A549 (cell line): ENCODE measurements at regions of chr7 and their contacts with region 1.

Region 1: GRCh38 chr7:66628361-66629140 is at the start of gene KCTD7:
- DNase-seq: peak; percentile 96
- ATAC-seq: peak; percentile 95 to 96
- H3K4me3 ChIP-seq: peak within 1 kb of the TSS; percentile 98
- H3K27ac ChIP-seq: peak within 1 kb of the TSS; percentile 99 to 100
- H3K4me1 ChIP-seq: peaks cover 9% of the 10 kb centered on the region; the same call in 2 of the 3 replicates
- CTCF ChIP-seq: no peak
- EP300 ChIP-seq: no peak
- POLR2A ChIP-seq: peak; percentile 98
- RAD21 ChIP-seq: peak in 1 of 2 experiments; percentile 21; a peak in 1 of 5 replicates
- polyA plus RNA-seq, gene KCTD7: 10.3 and 11.7 TPM in 2 replicates

Region 2: GRCh38 chr7:66617295-66617694 is 11.3 kb before region 1 on chr7:
- CTCF ChIA-PET with region 1: interaction called, 3 read pairs
- POLR2A ChIA-PET with region 1: interaction called, 12 read pairs
- DNase-seq: no peak
- ATAC-seq: no peak
- H3K4me3 ChIP-seq: no peak overlapping the region
- H3K27ac ChIP-seq: no peak overlapping the region
- H3K4me1 ChIP-seq: no peaks in the 10 kb centered on the region
- CTCF ChIP-seq: no peak
- EP300 ChIP-seq: no peak
- POLR2A ChIP-seq: no peak
- RAD21 ChIP-seq: no peak

Region 3: DNA sequence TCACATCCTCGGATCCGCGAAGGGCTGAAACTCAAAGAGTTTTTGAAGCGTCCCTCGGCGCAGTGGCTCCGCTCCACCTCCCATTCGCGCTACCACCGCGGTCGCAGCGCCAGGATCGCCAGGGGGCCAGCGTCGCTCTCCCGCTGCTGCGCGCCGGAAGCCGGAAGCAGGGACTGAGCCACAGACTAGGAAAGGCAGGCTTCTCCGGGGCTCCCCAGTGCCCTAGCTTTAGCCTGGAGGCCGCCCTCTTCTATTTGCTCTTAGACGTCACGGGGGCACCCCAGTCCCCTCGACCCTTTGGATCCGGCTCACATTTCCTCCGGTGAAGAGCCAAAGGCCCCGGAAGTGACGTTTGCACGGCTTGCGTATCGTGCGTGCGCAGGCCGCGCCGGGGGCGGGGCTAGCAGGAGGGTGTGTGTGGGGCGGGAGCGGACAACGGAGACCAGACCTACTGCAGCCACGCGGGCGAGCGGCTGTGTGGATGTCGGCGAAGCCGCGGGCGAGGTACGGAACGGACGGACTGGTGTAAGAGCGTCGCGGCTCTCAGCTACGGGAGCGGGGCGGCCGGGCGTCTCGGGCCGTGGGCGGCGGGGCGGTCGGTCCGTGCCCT is 25.7 kb after region 1 on chr7:
- CTCF ChIA-PET with region 1: no interaction called
- POLR2A ChIA-PET with region 1: interaction called, 21 read pairs
- DNase-seq: peak; percentile 96 to 98
- ATAC-seq: peak; percentile 93 to 95
- H3K4me3 ChIP-seq: peak overlapping the region; percentile 94
- H3K27ac ChIP-seq: peak overlapping the region; percentile 89 to 92
- H3K4me1 ChIP-seq: peaks cover 16% of the 10 kb centered on the region
- CTCF ChIP-seq: no peak
- EP300 ChIP-seq: no peak
- POLR2A ChIP-seq: peak; percentile 90
- RAD21 ChIP-seq: peak; percentile 10 to 18; a peak in 1 of 5 replicates

Region 4: GRCh38 chr7:66681491-66682349 is 53.2 kb after region 1 on chr7:
- CTCF ChIA-PET with region 1: no interaction called
- POLR2A ChIA-PET with region 1: interaction called, 12 read pairs
- DNase-seq: peak; percentile 96 to 97
- ATAC-seq: peak; percentile 97 to 98
- H3K4me3 ChIP-seq: peak overlapping the region; percentile 88
- H3K27ac ChIP-seq: peak overlapping the region; percentile 95
- H3K4me1 ChIP-seq: peaks cover 15% of the 10 kb centered on the region; the same call in 2 of the 3 replicates
- CTCF ChIP-seq: no peak
- EP300 ChIP-seq: no peak
- POLR2A ChIP-seq: peak; percentile 73
- RAD21 ChIP-seq: no peak

Region 5: DNA sequence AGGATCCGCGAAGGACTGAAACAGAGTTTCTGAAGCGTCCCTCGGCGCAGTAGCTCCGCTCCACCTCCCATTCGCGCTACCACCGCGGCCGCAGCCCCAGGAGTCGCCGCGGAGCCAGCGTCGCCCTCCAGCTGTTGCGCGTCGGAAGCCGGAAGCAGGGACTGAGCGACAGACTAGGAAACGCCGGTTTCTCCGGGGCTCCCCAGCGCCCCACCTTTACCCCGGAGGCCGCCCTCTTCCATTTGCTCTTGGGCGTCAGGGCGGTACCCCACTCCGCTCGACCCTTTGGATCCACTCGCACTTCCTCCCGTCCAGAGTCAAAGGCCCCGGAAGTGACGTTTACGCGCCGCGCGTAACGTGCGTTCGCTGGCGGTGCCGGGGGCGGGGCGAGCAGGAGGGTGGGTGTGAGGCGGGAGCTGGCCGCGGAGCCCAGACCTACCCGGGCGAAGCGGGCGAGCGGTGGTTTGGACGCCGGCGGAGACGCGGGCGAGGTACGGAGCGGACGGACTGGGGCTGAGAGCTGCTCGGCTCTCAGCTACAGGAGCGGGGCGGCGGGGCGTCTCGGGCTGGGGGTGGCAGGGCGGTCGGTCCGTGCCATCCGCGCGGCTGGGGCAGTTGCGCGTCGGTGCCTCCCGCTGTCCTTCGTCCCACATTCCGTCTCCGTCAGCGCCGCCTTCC is 111.9 kb after region 1 on chr7 and contains the start of gene RABGEF1:
- CTCF ChIA-PET with region 1: interaction called, 3 read pairs
- POLR2A ChIA-PET with region 1: interaction called, 12 read pairs
- DNase-seq: peak; percentile 94 to 96
- ATAC-seq: peak; percentile 94 to 95
- H3K4me3 ChIP-seq: peak within 1 kb of the TSS; percentile 76
- H3K27ac ChIP-seq: peak within 1 kb of the TSS; percentile 82 to 92
- H3K4me1 ChIP-seq: peaks cover 9% of the 10 kb centered on the region; the same call in 2 of the 3 replicates
- CTCF ChIP-seq: no peak
- EP300 ChIP-seq: no peak
- POLR2A ChIP-seq: peak; percentile 73
- RAD21 ChIP-seq: no peak
- polyA plus RNA-seq, gene RABGEF1: 22.4 and 22.6 TPM in 2 replicates